ENCODE measurements at regions of chr17 and their contacts with region 1.

Region 1: DNA sequence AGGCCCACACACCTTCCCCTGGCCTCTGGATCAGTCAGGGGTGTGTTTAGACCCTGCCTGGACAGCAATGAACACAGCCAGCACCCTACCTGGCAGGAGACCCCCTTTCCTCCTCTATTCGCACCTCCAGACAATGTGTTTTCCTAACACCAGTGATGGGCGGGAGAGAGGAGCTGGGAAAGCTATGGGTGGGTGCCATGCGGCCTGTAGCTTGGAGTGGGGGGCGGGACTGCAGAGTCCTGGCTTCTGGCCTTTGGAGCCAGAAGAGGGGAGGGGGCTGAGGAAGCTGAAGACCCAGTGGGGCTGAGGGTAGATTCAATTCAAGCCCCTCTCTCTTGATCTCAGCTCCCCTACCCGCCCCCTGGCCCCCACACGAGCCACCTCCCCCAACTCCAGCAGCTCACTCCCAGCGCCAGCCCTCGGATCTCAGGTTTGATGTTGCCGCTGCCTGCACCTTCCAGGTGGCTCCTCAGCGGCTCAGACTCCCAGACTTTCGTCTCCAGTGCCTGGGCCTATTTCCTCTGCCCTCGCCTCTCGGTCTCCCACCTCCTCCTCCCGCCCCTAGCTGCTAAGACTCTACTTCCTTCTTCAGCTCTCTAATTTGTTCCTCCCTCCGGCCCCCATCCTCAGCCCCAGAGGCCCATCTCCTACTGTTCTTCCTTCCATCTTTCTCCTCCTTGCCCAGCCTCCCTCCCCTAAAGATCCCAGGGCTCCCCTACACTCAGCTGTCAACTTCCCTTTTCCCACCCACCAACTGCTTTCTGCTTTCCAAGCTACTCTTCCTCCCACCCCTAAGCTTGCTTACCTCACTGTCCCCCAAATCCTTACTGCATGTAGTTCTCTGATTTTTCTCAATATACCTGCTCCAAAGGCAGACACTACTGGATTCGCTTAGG is 6.8 kb upstream of the SP6 start:
- DNase-seq: no peak
- H3K4me3 ChIP-seq: no peak overlapping the region
- H3K4me3 Mint-ChIP-seq: no peak overlapping the region
- H3K27ac ChIP-seq: no peak overlapping the region
- H3K27ac Mint-ChIP-seq: no peak overlapping the region
- H3K4me1 ChIP-seq: peaks cover 3% of the 10 kb centered on the region
- H3K4me1 Mint-ChIP-seq: no peaks in the 10 kb centered on the region
- H3K27me3 ChIP-seq: peaks cover 6% of the 10 kb centered on the region
- H3K27me3 Mint-ChIP-seq: peaks cover 30 to 61% of the 10 kb centered on the region in 2 donors

Region 2: DNA sequence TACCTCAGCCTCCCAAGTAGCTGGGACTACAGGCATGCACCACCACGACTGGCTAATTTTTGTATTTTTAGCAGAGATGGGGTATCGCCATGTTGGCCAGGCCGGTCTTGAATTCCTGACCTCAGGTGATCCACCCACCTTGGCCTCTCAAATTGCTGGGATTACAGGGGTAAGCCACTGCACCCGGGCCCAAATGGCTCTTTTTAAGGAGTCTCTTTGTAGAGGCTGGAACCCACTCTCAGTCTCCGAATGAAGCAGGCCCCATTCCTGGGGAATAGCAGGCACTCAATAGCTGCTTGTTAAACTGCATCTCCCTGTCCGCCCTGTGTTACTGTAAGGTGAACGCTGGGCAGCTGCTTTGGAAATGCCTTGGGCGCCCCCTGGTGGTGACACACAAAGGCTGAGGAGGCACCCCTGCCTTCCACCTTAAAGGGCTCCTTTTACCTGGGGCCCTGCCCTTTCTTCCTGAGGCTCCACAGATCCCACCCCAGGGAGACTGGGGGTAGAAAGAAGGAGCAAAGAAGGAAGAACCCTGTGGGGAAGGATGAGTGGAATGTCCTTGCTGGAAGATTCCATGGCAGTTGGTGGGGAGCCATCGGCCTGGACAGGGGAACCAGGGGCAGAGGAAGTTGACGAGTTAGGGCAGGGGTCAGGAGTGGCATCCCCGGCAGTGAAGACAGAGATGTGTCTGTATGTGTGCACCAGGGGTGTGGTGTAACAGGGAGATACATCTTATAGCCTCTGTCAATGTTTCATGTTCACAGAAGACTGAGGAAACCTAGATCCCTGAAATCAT is 32.1 kb after region 1 on chr17:
- CTCF ChIA-PET with region 1: interaction called, 314 read pairs
- POLR2A ChIA-PET with region 1: no interaction called
- DNase-seq: peak; percentile 79 to 93 (median 87)
- H3K4me3 ChIP-seq: no peak overlapping the region
- H3K4me3 Mint-ChIP-seq: peak overlapping the region in 2 of 7 donors; percentile 11 to 70
- H3K27ac ChIP-seq: no peak overlapping the region
- H3K27ac Mint-ChIP-seq: peak overlapping the region in 1 of 8 donors; percentile 17
- H3K4me1 ChIP-seq: peaks cover 19% of the 10 kb centered on the region
- H3K4me1 Mint-ChIP-seq: peaks cover 18 to 27% (median 22%) of the 10 kb centered on the region in 3 donors
- H3K27me3 ChIP-seq: no peaks in the 10 kb centered on the region
- H3K27me3 Mint-ChIP-seq: peaks cover 0 to 5% of the 10 kb centered on the region in 2 donors